Heart left ventricle (tissue), 16 donors: ENCODE measurements at regions of chr14 and their contacts with region 1.

Region 1: GRCh38 chr14:68843471-68844209 is 50.8 kb upstream of the ZFP36L1 start:
- DNase-seq: peak; percentile 75 to 90 (median 78)
- ATAC-seq: peak; percentile 76 to 91 (median 86)
- H3K4me3 ChIP-seq: peak overlapping the region in 9 of 12 donors; percentile 30 to 57 (median 38)
- H3K27ac ChIP-seq: peak overlapping the region in 2 of 12 donors; percentile 36 to 74
- H3K4me1 ChIP-seq: peaks cover 0 to 13% (median 5%) of the 10 kb centered on the region in 12 donors
- H3K27me3 ChIP-seq: no peaks in the 10 kb centered on the region
- CTCF ChIP-seq: peak; percentile 84 to 95 (median 92)
- POLR2A ChIP-seq: no peak

Region 2: GRCh38 chr14:67837011-67837624 is 1006.5 kb before region 1 on chr14:
- intact Hi-C with region 1: loop called in 3 of 10 experiments (anchors 5 to 10 kb)
- DNase-seq: peak in 3 of 5 donors; percentile 52 to 64 (median 60)
- ATAC-seq: peak in 1 of 4 donors; percentile 41
- H3K4me3 ChIP-seq: no peak overlapping the region
- H3K27ac ChIP-seq: no peak overlapping the region
- H3K4me1 ChIP-seq: no peaks in the 10 kb centered on the region
- H3K27me3 ChIP-seq: no peaks in the 10 kb centered on the region
- CTCF ChIP-seq: peak; percentile 33 to 63 (median 44)
- POLR2A ChIP-seq: no peak

Region 3: GRCh38 chr14:67883717-67884116 is 959.9 kb before region 1 on chr14:
- intact Hi-C with region 1: loop called in 3 of 10 experiments (anchors 5 kb)
- DNase-seq: no peak
- ATAC-seq: no peak
- H3K4me3 ChIP-seq: no peak overlapping the region
- H3K27ac ChIP-seq: peak overlapping the region in 1 of 12 donors; percentile 22
- H3K4me1 ChIP-seq: peaks cover 0 to 26% (median 0%) of the 10 kb centered on the region in 12 donors
- H3K27me3 ChIP-seq: no peaks in the 10 kb centered on the region
- CTCF ChIP-seq: peak in 9 of 12 donors; percentile 17 to 55 (median 33)
- POLR2A ChIP-seq: no peak

Region 4: DNA sequence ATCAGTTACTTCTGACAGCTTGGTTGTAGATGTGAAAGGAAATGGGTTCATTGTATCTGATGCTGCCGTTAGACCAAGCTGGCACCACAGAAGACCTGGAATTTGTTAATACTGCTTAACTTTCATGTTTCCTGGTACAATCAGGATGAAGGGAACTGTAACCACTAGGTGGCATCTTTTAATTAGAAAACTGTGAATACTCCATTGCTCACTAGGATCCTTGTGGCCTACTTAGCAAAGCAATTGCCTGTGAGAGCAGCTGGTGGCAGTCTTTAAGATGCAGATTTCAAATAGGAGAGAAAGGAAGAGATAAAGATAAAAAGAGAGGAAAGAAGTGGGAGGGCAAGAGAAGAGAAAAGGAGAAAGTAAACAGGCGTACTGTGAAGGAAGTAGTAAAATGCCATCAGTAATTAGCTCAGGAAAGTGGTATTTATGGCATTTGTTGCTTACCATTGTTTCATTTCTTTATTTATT is 909.6 kb before region 1 on chr14:
- intact Hi-C with region 1: loop called in 1 of 10 experiments (anchors 5 kb)
- DNase-seq: peak in 3 of 5 donors; percentile 27 to 30 (median 30)
- ATAC-seq: peak; percentile 71 to 96 (median 84)
- H3K4me3 ChIP-seq: no peak overlapping the region
- H3K27ac ChIP-seq: peak overlapping the region in 10 of 12 donors; percentile 8 to 58 (median 31)
- H3K4me1 ChIP-seq: peaks cover 0 to 23% (median 6%) of the 10 kb centered on the region in 12 donors
- H3K27me3 ChIP-seq: no peaks in the 10 kb centered on the region
- CTCF ChIP-seq: peak; percentile 46 to 83 (median 62)
- POLR2A ChIP-seq: no peak

Region 5: GRCh38 chr14:68563246-68564131 is 280.2 kb before region 1 on chr14:
- intact Hi-C with region 1: no loop called
- DNase-seq: peak in 1 of 5 donors; percentile 70
- ATAC-seq: peak; percentile 35 to 76 (median 57)
- H3K4me3 ChIP-seq: no peak overlapping the region
- H3K27ac ChIP-seq: peak overlapping the region; percentile 48 to 91 (median 78)
- H3K4me1 ChIP-seq: peaks cover 3 to 64% (median 34%) of the 10 kb centered on the region in 12 donors
- H3K27me3 ChIP-seq: no peaks in the 10 kb centered on the region
- CTCF ChIP-seq: no peak
- POLR2A ChIP-seq: no peak

Region 6: DNA sequence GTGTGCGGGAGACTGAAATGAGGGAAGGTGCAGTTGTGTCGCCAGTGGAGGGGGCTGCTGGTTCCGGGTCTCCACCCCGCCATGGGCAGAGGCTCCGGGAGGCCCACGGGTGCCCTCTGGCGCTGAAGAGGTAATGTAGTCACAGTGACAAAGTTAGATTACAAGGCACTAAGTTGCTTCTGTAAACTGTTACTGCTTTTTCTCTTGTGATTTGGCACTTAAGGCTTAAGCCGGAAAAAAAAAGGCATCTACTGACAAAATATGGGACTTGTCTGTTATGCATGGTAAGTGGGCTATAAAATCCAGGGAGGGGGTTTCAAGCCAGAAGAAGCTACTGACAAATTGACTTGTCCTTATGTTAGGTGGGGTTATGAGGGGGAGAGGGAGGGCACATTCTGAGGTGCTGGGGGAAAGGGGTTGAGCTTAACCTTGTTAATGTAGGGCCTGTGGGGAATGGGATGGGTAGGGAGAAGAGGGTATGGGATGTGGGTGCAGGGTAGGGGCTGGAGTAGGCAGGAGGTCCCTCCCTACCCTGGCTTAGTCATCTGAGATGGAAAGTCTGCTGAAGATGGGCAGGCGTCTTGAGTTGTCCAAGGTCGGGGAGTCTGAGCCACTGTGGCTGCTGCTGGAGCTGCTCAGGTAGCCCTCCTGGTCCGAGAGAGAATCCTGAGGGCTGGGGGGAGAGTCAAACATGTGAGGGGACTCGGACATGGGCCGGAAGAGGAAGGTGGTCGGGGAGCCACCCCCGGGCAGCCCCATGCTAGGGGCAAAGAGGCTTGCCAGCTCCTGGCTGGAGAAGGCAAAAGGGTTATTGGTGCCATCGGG is 54.4 kb before region 1 on chr14:
- intact Hi-C with region 1: no loop called
- DNase-seq: peak; percentile 86 to 91 (median 88)
- ATAC-seq: peak in 3 of 4 donors; percentile 34 to 36 (median 35)
- H3K4me3 ChIP-seq: peak overlapping the region; percentile 60 to 94 (median 84)
- H3K27ac ChIP-seq: peak overlapping the region; percentile 98 to 100 (median 99)
- H3K4me1 ChIP-seq: peaks cover 0 to 48% (median 25%) of the 10 kb centered on the region in 12 donors
- H3K27me3 ChIP-seq: no peaks in the 10 kb centered on the region
- CTCF ChIP-seq: peak; percentile 55 to 83 (median 78)
- POLR2A ChIP-seq: no peak

Region 7: DNA sequence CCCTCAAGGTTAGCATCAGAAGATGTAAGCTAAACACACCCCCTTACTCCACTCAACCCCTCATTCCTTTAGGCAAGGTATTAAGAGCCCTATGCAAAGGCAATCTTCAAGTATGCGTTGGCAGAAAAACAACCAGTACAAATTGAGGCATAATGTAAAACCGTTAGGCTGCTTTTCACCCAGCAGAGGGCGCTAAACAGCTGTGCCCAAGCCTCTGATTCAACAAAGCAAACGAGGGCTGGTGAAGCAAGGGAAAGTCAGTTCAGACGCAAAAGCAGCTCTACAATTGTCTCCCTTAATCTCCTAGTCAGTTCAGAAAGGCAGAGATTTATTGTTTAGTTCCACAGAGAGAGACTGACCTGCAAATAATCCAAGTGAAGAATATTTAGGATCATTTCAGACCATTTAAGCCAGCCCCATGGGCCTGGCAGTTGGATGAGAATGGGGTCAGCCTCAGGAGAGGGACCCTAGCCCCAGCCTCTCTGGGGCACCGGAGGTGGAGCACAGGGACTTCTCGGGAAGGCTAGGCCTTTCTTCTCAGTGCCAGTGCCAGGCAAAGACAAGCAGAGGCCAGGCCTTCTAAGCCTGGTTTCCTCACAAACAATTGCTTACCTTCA is 285.7 kb after region 1 on chr14:
- intact Hi-C with region 1: no loop called
- DNase-seq: peak in 4 of 5 donors; percentile 68 to 78 (median 72)
- ATAC-seq: peak; percentile 70 to 84 (median 78)
- H3K4me3 ChIP-seq: no peak overlapping the region
- H3K27ac ChIP-seq: peak overlapping the region in 4 of 12 donors; percentile 6 to 64 (median 18)
- H3K4me1 ChIP-seq: peaks cover 2 to 82% (median 47%) of the 10 kb centered on the region in 12 donors
- H3K27me3 ChIP-seq: no peaks in the 10 kb centered on the region
- CTCF ChIP-seq: peak; percentile 85 to 96 (median 91)
- POLR2A ChIP-seq: no peak